AG04449 (cell line): ENCODE measurements at regions of chr3 and their contacts with region 1.

Region 1: GRCh38 chr3:149752051-149752787 is at the start of gene COMMD2:
- DNase-seq: no peak
- H3K4me3 ChIP-seq: peak within 1 kb of the TSS; percentile 98
- CTCF ChIP-seq: no peak

Region 2: GRCh38 chr3:149736175-149736952 is 15.9 kb before region 1 on chr3:
- CTCF ChIA-PET with region 1: interaction called, 11 read pairs
- POLR2A ChIA-PET with region 1: no interaction called
- DNase-seq: peak; percentile 17
- H3K4me3 ChIP-seq: no peak overlapping the region
- CTCF ChIP-seq: no peak

Region 3: GRCh38 chr3:149796026-149796425 is 43.8 kb after region 1 on chr3:
- CTCF ChIA-PET with region 1: no interaction called
- POLR2A ChIA-PET with region 1: no interaction called
- DNase-seq: no peak
- H3K4me3 ChIP-seq: no peak overlapping the region
- CTCF ChIP-seq: no peak

Region 4: GRCh38 chr3:150146991-150147761 is 395.0 kb after region 1 on chr3:
- CTCF ChIA-PET with region 1: no interaction called
- POLR2A ChIA-PET with region 1: no interaction called
- DNase-seq: peak; percentile 69
- H3K4me3 ChIP-seq: peak overlapping the region; percentile 13; the same call in 1 of the 2 replicates
- CTCF ChIP-seq: no peak